Uterus (tissue), 4 donors: ENCODE measurements at regions of chr1 and their contacts with region 1.

Region 1: GRCh38 chr1:41261926-41262618 is 20.0 kb upstream of the SCMH1 start:
- DNase-seq: no peak
- H3K4me3 ChIP-seq: no peak overlapping the region
- H3K27ac ChIP-seq: no peak overlapping the region
- H3K4me1 ChIP-seq: no peaks in the 10 kb centered on the region
- H3K27me3 ChIP-seq: no peaks in the 10 kb centered on the region
- CTCF ChIP-seq: no peak
- POLR2A ChIP-seq: no peak

Region 2: GRCh38 chr1:41435570-41436178 is 173.6 kb after region 1 on chr1:
- intact Hi-C with region 1: loop called (anchors 5 kb)
- DNase-seq: no peak
- H3K4me3 ChIP-seq: no peak overlapping the region
- H3K27ac ChIP-seq: no peak overlapping the region
- H3K4me1 ChIP-seq: peaks cover 0 to 11% of the 10 kb centered on the region in 2 donors
- H3K27me3 ChIP-seq: no peaks in the 10 kb centered on the region
- CTCF ChIP-seq: no peak
- POLR2A ChIP-seq: no peak

Region 3: GRCh38 chr1:41455479-41456332 is 193.6 kb after region 1 on chr1:
- intact Hi-C with region 1: no loop called
- DNase-seq: no peak
- H3K4me3 ChIP-seq: no peak overlapping the region
- H3K27ac ChIP-seq: no peak overlapping the region
- H3K4me1 ChIP-seq: no peaks in the 10 kb centered on the region
- H3K27me3 ChIP-seq: no peaks in the 10 kb centered on the region
- CTCF ChIP-seq: no peak
- POLR2A ChIP-seq: no peak